ENCODE measurements at regions of chr6 and their contacts with region 1.

Region 1: GRCh38 chr6:34664256-34664971 is 32.2 kb downstream of the ILRUN start:
- DNase-seq: no peak
- ATAC-seq: no peak
- H3K4me3 ChIP-seq: peak overlapping the region; percentile 2; the same call in 1 of the 2 replicates
- H3K27ac ChIP-seq: peak overlapping the region; percentile 84
- H3K4me1 ChIP-seq: peaks cover 48% of the 10 kb centered on the region
- H3K27me3 ChIP-seq: no peaks in the 10 kb centered on the region
- CTCF ChIP-seq: no peak
- EP300 ChIP-seq: no peak
- POLR2A ChIP-seq: no peak
- RAD21 ChIP-seq: no peak

Region 2: GRCh38 chr6:34436803-34437643 is 227.4 kb before region 1 on chr6:
- CTCF ChIA-PET with region 1: no interaction called
- POLR2A ChIA-PET with region 1: no interaction called
- RAD21 ChIA-PET with region 1: no interaction called
- SMC1A ChIA-PET with region 1: no interaction called
- in situ Hi-C with region 1: no loop called
- intact Hi-C with region 1: no loop called
- DNase-seq: no peak
- ATAC-seq: no peak
- H3K4me3 ChIP-seq: no peak overlapping the region
- H3K27ac ChIP-seq: no peak overlapping the region
- H3K4me1 ChIP-seq: no peaks in the 10 kb centered on the region
- H3K27me3 ChIP-seq: no peaks in the 10 kb centered on the region
- CTCF ChIP-seq: no peak
- EP300 ChIP-seq: no peak
- POLR2A ChIP-seq: no peak
- RAD21 ChIP-seq: no peak

Region 3: GRCh38 chr6:34580707-34581560 is 83.5 kb before region 1 on chr6:
- CTCF ChIA-PET with region 1: no interaction called
- POLR2A ChIA-PET with region 1: no interaction called
- RAD21 ChIA-PET with region 1: no interaction called
- SMC1A ChIA-PET with region 1: no interaction called
- in situ Hi-C with region 1: no loop called
- intact Hi-C with region 1: no loop called
- DNase-seq: no peak
- ATAC-seq: no peak; the same call in 1 of the 3 replicates
- H3K4me3 ChIP-seq: no peak overlapping the region
- H3K27ac ChIP-seq: no peak overlapping the region
- H3K4me1 ChIP-seq: no peaks in the 10 kb centered on the region
- H3K27me3 ChIP-seq: no peaks in the 10 kb centered on the region
- CTCF ChIP-seq: no peak
- EP300 ChIP-seq: no peak
- POLR2A ChIP-seq: no peak
- RAD21 ChIP-seq: no peak

Region 4: GRCh38 chr6:34650823-34651222 is 13.6 kb before region 1 on chr6:
- CTCF ChIA-PET with region 1: interaction called, 4 read pairs
- POLR2A ChIA-PET with region 1: interaction called, 246 read pairs
- RAD21 ChIA-PET with region 1: interaction called, 239 read pairs
- SMC1A ChIA-PET with region 1: interaction called, 251 read pairs
- in situ Hi-C with region 1: no loop called
- intact Hi-C with region 1: no loop called
- DNase-seq: no peak
- ATAC-seq: no peak
- H3K4me3 ChIP-seq: no peak overlapping the region
- H3K27ac ChIP-seq: peak overlapping the region; percentile 71
- H3K4me1 ChIP-seq: peaks cover 35% of the 10 kb centered on the region
- H3K27me3 ChIP-seq: no peaks in the 10 kb centered on the region
- CTCF ChIP-seq: no peak
- EP300 ChIP-seq: no peak
- POLR2A ChIP-seq: no peak
- RAD21 ChIP-seq: no peak